Posterior vena cava (tissue), 2 donors: ENCODE measurements at regions of chr4 and their contacts with region 1.

Region 1: DNA sequence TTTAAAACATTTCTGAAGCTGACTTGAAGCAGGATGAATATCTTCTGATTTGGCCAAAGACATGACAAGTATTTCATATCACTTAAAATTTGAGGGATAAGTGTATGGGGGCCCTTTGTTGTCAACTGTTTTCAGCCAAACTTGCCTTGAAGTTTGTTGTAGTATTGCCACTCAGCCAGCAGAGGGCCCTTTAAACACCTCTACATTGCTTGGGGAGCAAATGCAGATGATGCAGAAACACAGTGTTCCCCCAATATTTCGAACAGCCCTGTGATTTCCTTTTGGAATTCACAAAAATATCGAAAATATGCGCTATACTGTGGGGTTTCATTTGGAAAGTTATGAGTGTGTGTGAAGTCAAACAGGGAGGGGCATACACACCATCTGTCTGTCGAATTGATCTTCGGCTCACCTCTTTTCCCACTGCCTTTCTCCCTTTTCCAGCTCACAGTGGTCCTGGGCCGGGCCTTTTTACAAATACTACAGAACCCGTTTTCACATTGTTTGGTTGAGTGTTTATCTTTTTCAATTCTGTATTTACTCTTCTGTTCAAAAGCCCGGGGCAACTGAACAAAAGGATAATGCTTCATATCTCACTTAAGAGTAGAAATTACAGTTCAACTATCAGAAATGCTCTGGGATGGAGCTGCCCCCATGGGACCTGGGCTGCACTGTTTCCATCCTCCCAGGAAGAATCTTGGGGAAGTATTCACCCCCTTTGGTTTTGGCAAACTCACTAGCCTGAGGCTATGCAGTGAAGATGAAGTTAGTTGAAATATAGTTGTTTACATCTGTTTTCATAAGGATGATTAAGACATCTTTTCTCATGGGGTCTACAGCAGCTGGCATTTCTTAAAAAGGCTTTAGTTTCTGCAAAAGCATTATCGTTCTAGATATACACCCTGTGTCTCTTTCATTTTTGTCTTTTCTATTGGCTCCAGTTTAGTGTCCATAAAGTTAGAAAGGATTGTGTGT is 137.6 kb downstream of the EGF start:
- DNase-seq: no peak

Region 2: DNA sequence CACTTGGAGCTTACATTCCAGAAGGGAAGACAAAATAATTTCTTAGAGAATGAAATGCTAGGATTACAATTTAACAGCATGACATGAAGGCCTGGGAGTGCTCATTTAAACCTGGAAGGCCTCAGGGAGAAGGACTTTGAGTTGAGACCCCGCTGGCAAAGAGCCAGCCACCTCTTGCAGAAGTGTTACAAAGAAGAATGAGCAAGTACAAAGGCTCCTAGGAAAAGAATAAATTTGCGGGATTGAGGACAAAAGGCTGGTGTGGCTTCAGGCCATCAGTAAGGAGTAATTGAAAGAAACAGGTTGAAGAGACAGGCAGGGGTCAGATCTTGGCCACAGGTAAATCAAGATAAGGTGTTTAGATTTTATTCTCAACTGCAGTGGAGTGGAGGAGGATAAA is 151.3 kb after region 1 on chr4:
- intact Hi-C with region 1: loop called in 1 of 2 experiments (anchors 10 kb)
- DNase-seq: no peak

Region 3: DNA sequence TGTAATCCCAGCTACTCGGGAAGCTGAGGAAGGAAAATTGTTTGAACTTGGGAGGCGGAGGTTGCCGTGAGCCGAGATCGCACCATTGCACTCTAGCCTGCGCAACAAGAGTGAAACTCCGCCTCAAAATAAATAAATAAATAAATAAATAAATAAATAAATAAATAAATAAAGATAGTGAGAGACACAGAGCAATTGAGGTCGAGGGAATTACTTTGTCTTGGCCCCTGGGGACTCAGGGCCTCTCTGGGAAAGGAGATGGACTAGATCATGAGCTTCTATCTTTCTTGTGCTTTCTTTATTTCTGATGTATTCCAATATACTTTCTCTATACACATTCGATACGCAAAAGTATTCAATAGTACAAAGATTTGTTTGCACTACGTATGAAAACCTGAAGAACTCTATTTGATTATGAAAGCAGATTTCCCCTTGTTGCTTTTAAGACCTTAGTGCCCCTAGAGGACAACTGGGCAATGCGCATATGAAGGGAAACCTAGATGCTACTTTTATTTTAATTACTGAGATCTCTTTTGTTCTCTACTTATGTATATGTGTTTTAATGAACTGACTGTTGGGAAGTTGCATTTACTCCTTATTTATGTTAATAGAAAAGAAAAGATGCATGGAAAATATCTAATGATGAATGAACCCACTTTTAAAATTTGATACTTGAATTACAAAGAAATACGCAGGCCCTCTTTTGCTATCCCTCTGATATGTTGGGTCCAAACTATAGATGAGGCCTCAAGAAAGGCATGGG is 160.9 kb after region 1 on chr4:
- intact Hi-C with region 1: loop called (anchors 5 to 10 kb)
- DNase-seq: no peak